ENCODE measurements at regions of chr2 and their contacts with region 1.

Region 1: GRCh38 chr2:69565431-69565839 is 78.1 kb downstream of the AAK1 start:
- DNase-seq: peak; percentile 65
- CTCF ChIP-seq: peak; percentile 87

Region 2: GRCh38 chr2:69411120-69411519 is 154.3 kb before region 1 on chr2:
- in situ Hi-C with region 1: no loop called
- DNase-seq: no peak
- CTCF ChIP-seq: no peak

Region 3: GRCh38 chr2:69717861-69718273 is 152.4 kb after region 1 on chr2:
- in situ Hi-C with region 1: loop called (anchors 10 kb)
- DNase-seq: peak; percentile 49
- CTCF ChIP-seq: no peak

Region 4: DNA sequence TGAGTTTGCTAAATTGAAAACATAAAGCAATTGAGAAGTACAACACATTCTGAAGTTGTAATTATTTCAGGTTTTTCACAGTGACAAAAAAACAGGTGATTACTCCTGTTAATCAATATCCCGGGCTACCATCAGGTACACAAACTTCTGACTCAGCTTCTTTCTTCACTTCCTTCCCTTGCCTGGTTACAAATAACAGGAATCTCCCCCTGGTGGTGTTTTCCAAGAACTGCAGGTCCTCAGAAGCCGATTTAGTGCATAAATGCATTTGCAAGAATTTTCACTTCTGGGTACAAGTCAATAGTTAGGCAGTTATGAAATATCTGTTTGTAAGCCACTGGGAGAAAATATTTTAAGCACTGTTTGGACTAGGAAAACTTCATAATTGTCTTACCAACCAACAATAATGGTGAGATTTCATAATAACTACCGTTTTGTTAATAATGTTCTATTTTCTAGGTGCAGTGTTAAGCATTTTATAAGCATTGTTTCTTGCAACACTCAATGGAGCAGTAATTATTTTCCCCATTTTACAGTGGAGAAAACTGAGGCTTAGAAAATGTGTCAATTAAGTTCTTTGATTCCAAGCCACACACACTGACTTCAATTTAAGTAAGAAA is 251.6 kb after region 1 on chr2:
- in situ Hi-C with region 1: loop called (anchors 25 kb)
- DNase-seq: peak; percentile 53
- CTCF ChIP-seq: peak; percentile 72